ENCODE measurements at regions of chr1 and their contacts with region 1.

Region 1: DNA sequence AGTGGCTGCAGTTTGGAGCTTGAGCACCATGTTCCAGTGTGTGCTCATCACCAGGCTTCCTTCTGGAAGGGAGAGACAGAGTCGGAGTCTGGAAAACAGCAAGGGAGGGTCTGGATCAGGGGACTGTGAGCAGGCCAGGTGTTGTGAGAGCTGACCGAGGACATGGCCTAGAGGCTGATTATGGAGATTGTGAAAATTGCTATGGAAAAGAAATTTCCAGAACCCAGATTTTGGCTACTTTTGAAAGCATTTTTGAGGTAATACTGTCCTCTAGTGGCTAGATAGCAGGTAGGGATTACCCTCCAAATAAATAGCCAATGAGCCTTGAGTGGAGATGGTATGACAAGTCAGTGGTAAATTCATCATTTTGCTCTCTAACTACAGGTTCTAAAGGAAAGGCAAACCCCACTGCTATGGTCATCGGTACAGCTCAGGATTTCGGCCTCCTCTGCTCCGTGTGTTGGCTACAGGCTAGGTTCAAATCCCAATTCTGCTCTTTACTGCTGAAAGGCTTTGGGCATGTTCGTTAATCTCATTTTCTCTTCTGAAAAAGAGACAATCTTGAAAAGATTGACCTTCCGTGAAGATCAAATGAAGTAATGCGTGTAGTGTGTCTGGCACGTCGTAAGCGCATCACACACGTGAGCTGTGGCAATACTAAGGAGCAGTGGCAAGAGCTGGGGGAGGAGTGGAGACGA is 1.0 kb upstream of the HAO2 start:
- DNase-seq: no peak
- H3K4me3 ChIP-seq: no peak overlapping the region
- H3K27ac ChIP-seq: no peak overlapping the region
- H3K4me1 ChIP-seq: peaks cover 0 to 9% (median under 1%) of the 10 kb centered on the region in 4 donors
- H3K27me3 ChIP-seq: no peaks in the 10 kb centered on the region
- CTCF ChIP-seq: peak; percentile 82 to 90 (median 89)
- EP300 ChIP-seq: no peak
- POLR2A ChIP-seq: no peak

Region 2: DNA sequence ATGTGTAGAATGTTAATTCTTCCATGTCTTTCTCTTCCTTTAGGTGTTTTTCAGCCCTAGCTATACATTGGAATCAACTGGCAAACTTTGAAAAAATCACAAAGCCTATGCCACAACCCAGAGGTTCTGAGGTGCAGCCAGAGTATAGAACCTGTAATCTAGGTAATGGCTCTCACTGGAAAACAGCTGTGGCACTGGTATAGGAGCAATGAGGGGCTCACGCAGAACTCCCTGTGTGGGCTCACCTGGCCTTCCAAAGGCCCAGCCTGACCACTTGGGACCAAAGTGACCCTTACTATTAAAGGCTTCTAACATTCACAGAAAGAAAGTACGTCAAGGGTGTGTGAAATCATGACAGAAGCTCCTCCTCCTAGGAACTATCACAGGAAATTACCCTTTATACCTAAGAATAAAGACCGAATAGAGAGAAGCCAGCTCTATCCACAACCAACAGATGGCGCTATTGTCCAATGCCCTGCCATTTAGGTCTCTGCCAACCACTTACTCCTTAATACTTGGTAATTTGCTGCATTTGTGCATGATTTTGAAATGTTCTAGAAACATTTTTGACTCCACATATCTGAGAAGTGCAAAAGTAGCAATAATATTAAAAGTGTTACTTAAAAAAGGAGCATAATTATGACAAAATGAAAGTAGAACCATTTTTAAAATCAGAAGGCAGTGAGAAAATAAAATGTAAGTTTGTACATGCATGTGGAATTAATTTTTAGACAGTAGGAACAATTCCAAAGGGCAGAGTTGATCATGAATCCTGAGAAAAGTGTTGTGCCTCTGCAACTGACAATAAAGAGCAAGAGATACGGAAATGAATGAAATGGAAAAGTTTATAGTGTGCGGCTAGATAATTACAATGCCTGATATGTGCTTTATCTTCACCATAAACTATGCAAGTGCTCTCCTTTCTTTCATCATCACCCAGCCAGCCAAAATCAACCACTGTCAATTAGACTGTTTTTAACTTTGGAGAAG is 92.1 kb before region 1 on chr1:
- in situ Hi-C with region 1: loop called in 3 of 4 experiments (anchors 10 kb)
- intact Hi-C with region 1: loop called (anchors 5 kb)
- DNase-seq: peak; percentile 35
- H3K4me3 ChIP-seq: no peak overlapping the region
- H3K27ac ChIP-seq: no peak overlapping the region
- H3K4me1 ChIP-seq: peaks cover 0 to 7% (median 0%) of the 10 kb centered on the region in 4 donors
- H3K27me3 ChIP-seq: no peaks in the 10 kb centered on the region
- CTCF ChIP-seq: peak; percentile 45 to 74 (median 73)
- EP300 ChIP-seq: no peak
- POLR2A ChIP-seq: no peak

Region 3: DNA sequence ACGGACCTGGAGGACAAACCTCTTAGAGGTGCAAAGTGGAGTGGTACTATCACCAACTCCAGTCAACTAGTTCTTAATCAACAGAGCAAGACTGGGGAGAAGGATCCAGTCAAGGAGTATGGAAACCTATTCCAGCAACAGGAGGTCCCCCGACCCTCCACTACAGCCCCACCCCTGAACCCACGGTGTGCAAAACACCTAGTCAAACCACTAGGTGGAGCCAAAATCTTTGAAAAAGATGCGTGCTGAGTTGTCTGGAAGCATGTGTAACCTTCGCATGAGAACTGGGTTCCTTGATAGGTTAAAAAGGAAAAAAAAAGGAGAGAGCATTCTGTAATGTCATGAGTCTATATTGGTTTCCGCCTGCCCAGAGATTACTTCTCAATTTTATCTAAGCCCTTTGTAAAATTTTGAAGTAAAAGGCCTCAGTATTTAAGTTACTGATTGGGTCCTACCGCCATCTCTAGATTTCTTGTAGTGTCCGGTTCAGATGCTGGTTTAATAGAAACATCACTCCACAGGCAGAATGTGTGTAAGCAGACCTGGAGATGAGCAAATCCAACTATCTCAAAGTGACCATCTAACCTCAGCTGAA is 80.9 kb before region 1 on chr1:
- in situ Hi-C with region 1: loop called in 1 of 4 experiments (anchors 10 kb)
- intact Hi-C with region 1: no loop called
- DNase-seq: peak; percentile 12
- H3K4me3 ChIP-seq: no peak overlapping the region
- H3K27ac ChIP-seq: no peak overlapping the region
- H3K4me1 ChIP-seq: no peaks in the 10 kb centered on the region
- H3K27me3 ChIP-seq: no peaks in the 10 kb centered on the region
- CTCF ChIP-seq: peak; percentile 51 to 57 (median 53)
- EP300 ChIP-seq: no peak
- POLR2A ChIP-seq: no peak

Region 4: GRCh38 chr1:119394085-119394484 is 26.5 kb after region 1 on chr1:
- in situ Hi-C with region 1: no loop called
- intact Hi-C with region 1: no loop called
- DNase-seq: peak; percentile 30
- H3K4me3 ChIP-seq: no peak overlapping the region
- H3K27ac ChIP-seq: peak overlapping the region; percentile 37 to 59 (median 51)
- H3K4me1 ChIP-seq: peaks cover 0 to 34% (median 16%) of the 10 kb centered on the region in 4 donors
- H3K27me3 ChIP-seq: no peaks in the 10 kb centered on the region
- CTCF ChIP-seq: peak in 1 of 5 experiments; percentile 29
- EP300 ChIP-seq: no peak
- POLR2A ChIP-seq: no peak